H1 (cell line): ENCODE measurements at regions of chr2 and their contacts with region 1.

Region 1: GRCh38 chr2:116109471-116109870 is 1667.0 kb downstream of the DPP10 start:
- DNase-seq: no peak
- H3K4me3 ChIP-seq: no peak overlapping the region
- H3K27ac ChIP-seq: no peak overlapping the region
- H3K4me1 ChIP-seq: no peaks in the 10 kb centered on the region
- H3K27me3 ChIP-seq: no peaks in the 10 kb centered on the region
- CTCF ChIP-seq: no peak
- EP300 ChIP-seq: no peak
- POLR2A ChIP-seq: no peak
- RAD21 ChIP-seq: no peak

Region 2: DNA sequence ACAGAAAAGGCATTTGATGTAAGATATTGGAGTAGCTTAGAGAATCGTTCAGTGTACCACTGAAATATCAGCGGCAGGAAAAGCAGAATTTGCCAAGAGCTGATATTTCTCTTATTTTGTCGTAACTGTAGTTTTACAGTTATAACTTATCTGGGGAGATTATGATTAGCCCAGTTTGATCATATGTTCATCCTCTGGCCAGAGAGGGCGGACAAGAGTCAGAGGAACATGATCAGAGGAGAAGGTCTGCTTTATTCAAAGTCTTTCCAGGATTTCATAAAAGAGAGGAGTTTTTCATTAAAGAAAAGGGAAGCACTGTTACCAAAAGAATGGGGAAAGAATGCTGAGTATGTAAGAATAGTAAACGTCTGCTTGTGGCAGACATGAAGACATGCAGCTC is 11.4 kb before region 1 on chr2:
- CTCF ChIA-PET with region 1: interaction called, 11 read pairs
- POLR2A ChIA-PET with region 1: no interaction called
- DNase-seq: no peak
- H3K4me3 ChIP-seq: no peak overlapping the region
- H3K27ac ChIP-seq: no peak overlapping the region
- H3K4me1 ChIP-seq: no peaks in the 10 kb centered on the region
- H3K27me3 ChIP-seq: no peaks in the 10 kb centered on the region
- CTCF ChIP-seq: peak in 1 of 3 experiments; percentile 31; a peak in 1 of 4 replicates
- EP300 ChIP-seq: no peak
- POLR2A ChIP-seq: no peak
- RAD21 ChIP-seq: peak; percentile 38 to 42

Region 3: GRCh38 chr2:116160657-116161056 is 51.2 kb after region 1 on chr2:
- CTCF ChIA-PET with region 1: no interaction called
- POLR2A ChIA-PET with region 1: no interaction called
- DNase-seq: no peak
- H3K4me3 ChIP-seq: no peak overlapping the region
- H3K27ac ChIP-seq: no peak overlapping the region
- H3K4me1 ChIP-seq: no peaks in the 10 kb centered on the region
- H3K27me3 ChIP-seq: no peaks in the 10 kb centered on the region; a peak in 1 of 7 replicates
- CTCF ChIP-seq: no peak
- EP300 ChIP-seq: no peak
- POLR2A ChIP-seq: no peak
- RAD21 ChIP-seq: no peak